ENCODE measurements at regions of chr4 and their contacts with region 1.

Region 1: DNA sequence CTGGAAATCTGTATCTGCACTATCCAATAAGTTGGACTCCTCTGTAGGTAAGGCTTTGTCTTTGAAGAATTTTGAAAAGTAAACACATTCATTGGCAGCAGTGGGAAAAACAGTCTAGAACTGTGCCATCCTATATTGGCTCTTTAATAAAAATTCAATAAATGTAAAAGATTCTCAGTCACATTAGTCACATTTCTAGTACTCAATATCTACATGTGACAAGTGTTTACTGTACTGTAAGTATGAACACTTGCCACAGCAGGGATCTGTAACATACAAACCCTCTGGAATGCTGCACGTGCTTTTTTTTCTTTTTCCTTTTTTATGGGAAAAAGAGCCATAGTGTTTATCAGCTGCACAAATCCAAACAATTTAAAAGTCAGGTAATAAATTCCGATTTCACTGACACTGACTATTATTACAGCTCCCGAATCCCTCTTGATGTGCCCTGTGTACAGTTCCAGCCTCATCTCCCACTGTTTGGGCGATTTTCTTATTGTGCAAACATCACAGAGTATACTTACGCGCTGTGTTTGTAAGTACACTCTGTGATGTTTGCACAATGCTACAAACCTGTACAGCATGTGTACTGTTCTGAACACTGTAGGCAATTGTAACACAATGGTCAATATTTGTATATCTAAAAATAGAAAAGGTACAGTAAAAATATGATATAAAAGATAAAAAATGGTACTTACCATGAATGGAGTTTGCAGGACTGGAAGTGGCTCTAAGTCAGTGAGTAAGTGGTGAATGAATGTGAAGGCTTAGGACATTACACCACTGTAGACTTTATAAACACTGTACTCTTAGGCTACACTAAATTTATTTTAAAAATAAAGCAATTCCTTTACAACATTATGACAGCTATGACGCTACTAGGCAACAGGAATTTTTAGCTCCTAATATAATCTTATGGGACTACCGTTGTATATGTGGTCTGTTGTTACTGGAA is 8.7 kb downstream of the PYURF start:
- DNase-seq: no peak
- H3K4me3 ChIP-seq: no peak overlapping the region
- H3K27ac ChIP-seq: no peak overlapping the region
- H3K27me3 ChIP-seq: no peaks in the 10 kb centered on the region
- CTCF ChIP-seq: no peak

Region 2: DNA sequence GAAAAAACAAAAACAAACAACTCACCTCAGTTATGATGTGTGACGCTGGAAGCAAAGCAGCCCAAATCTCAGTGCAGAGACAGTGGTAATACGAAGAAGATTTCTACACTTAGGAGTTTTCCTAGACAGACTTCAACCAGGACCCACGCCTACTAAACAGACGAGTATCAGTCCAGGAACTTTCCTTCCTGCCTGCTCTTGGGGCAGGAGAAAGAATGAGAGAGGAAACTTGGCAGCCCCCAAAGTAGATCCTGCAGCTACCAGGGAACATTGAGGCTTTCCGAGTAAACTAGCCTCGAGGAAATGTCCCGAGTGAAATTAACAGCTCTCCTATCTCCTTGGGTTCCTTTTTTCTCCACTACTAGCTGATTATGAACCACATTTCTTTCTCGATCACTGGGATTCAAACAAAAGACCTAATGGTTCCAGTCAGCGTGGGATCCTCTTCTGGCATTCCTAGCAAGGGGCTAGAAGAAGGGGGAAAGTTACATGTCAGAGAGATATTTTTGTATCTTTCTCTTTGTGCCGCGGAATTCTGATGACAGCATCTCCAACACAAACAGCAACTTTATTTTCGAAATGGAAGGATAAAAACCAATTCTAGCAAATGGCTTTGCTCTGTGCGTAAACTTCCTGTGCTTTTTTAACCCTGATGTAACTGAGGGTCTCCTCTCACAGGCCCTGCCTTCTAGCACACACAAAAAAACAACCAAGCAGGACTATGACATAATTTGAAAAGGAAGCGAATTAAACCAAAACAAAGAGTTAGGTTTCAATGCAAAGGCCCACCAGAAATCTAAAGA is 283.7 kb before region 1 on chr4:
- CTCF ChIA-PET with region 1: interaction called, 363 read pairs
- POLR2A ChIA-PET with region 1: no interaction called
- DNase-seq: no peak
- H3K4me3 ChIP-seq: peak overlapping the region; percentile 44
- H3K27ac ChIP-seq: peak overlapping the region; percentile 68
- H3K27me3 ChIP-seq: peaks cover 5% of the 10 kb centered on the region
- CTCF ChIP-seq: no peak

Region 3: GRCh38 chr4:88369936-88370335 is 144.9 kb before region 1 on chr4:
- CTCF ChIA-PET with region 1: interaction called, 27 read pairs
- POLR2A ChIA-PET with region 1: no interaction called
- DNase-seq: no peak
- H3K4me3 ChIP-seq: no peak overlapping the region
- H3K27ac ChIP-seq: no peak overlapping the region
- H3K27me3 ChIP-seq: peaks cover 5% of the 10 kb centered on the region
- CTCF ChIP-seq: no peak

Region 4: DNA sequence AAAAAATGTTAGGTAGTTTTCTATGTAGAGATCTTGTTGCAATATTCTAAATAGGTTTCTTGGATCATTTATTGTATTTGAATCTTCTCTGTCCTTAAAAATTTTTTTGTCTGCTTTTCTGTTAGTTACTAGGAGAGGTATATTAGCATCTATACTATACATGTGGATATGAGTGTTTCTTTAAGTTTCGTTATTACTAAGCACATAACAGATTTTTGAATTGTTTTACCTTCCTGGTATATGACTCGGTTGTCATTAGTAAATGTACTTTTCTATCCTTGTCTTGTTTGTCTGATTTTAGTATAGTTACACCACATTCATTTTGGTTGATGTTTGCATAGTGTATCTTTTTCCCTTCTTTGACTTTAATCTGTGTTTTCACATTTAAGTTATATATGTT is 11.5 kb before region 1 on chr4:
- CTCF ChIA-PET with region 1: interaction called, 32 read pairs
- POLR2A ChIA-PET with region 1: no interaction called
- DNase-seq: no peak
- H3K4me3 ChIP-seq: no peak overlapping the region
- H3K27ac ChIP-seq: no peak overlapping the region
- H3K27me3 ChIP-seq: peaks cover 5% of the 10 kb centered on the region
- CTCF ChIP-seq: no peak

Region 5: DNA sequence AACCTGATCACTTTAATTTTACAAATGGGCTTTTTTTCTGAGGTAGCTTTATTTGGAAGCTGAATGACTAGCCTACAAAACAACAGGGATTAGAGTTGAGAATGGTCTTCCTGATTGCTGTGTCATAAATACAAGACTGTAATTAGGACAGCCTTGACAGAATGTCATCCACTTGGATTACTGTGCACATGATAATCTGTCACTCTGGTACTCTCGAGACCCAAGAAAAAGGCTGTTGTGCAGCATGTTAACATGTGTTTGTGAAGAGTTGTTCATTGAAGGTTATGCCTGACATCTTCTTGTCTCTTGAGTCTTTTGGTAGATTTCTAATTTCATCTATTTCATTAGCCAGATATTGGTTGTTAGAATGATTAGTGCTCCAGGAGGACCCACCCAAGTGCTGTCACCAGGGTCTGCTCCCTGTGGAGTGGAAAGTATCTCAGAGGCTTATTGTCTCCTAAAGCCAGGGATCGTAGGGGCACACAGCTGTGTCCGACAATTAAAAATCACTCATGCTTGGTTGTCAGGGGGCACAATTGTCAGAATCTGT is 1005.0 kb after region 1 on chr4:
- CTCF ChIA-PET with region 1: no interaction called
- POLR2A ChIA-PET with region 1: no interaction called
- DNase-seq: no peak
- H3K4me3 ChIP-seq: no peak overlapping the region
- H3K27ac ChIP-seq: no peak overlapping the region
- H3K27me3 ChIP-seq: no peaks in the 10 kb centered on the region
- CTCF ChIP-seq: no peak